KBM-7 (cell line): ENCODE measurements at regions of chr1 and their contacts with region 1.

Region 1: DNA sequence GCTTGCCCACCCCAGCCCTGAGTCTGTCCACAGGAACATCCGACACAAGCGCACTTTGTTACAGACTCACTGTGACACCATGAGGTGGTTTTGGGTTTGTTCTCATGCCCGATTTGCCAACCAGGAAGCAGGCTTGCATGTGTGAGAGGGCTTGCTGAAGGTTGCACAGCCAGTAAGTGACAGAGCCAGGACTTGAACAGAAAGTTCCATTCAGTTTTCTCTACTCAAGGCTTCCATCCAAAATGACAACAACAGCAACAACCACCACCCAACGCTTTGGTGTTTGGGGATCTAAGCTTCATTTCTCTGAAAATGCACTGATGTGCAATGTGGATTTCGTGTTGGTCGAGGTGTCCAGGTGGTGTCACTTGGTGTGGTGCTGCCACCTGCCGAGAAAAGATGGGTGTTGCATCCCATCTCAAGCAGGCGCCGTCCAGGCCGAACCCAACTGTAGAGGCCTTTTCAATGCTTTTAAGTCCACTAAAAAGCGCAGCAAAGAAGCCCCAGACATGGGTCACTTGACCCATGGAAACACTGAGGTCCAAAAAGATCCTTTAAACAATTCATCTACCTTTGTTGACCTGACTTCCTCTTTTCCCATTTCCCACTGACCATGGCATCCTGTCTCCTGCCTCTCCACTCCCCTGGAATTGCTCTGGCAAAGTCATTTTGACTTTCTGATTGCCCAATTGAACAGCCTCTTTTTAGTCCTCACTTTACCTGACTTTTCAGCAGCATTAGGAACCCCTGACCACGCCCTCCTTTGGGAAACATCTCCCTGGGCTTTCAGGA is 12.2 kb downstream of the CITED4 start:
- DNase-seq: peak; percentile 83

Region 2: DNA sequence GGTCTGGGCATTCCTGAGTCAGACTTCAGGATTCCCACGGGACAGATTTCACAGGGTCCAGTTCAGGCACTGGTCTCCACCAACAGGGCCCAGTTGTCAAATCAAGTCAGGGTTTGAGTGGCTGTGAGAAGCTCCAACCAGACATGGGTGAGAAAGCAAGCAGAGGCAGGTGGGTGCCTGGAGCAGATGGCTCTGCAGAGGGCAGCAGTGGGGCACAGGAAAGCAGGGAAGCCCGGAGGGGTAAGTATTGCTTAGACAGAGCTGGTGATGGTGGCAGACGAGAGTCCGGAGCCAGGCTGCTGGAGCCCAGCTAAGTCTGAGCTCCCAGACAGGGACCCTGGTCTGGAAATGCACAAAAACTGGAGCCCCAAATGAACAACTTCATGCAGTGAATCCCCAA is 224.9 kb before region 1 on chr1:
- in situ Hi-C with region 1: loop called (anchors 10 kb)
- DNase-seq: peak; percentile 24

Region 3: DNA sequence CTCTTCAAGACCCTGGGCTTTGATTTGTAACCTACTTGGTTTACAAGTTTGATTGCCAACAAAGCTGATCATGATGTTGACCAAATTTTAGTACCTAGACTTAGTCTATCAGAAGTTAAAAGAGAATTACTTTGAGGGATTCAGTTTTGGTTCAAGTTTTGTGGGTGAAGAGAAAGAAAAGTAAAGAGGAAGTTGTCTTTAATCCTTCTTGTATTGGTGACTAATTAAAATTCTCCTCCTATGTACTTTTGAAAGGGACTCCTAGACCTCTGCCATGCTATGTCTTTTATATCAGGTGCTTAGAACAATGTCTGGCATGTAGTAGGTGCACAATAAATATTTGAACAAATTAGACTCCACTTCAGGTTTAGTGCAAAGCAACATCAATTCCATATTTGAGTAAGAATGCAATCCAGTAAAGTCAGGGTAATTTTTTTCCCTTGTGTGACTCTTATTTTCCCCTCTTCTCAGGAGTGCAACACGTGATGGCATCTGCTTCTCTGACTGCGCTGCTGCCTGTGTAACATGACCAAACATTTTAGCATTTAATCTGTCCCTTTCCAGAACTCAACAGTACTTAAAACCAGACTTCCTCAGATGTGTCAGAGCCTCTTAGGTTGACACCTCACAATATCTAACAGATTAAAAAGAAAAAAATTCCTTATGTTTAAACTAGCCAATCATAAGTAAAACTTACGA is 107.5 kb before region 1 on chr1:
- in situ Hi-C with region 1: no loop called
- DNase-seq: peak; percentile 21

Region 4: GRCh38 chr1:40951943-40952743 is 102.1 kb after region 1 on chr1:
- in situ Hi-C with region 1: loop called (anchors 10 kb)
- DNase-seq: peak; percentile 75